Cardiac septum (tissue), 1 donor: ENCODE measurements at regions of chr6 and their contacts with region 1.

Region 1: GRCh38 chr6:165649166-165650137 is 13.6 kb downstream of the PDE10A start:
- DNase-seq: no peak

Region 2: GRCh38 chr6:165573671-165574070 is 75.8 kb before region 1 on chr6:
- intact Hi-C with region 1: loop called (anchors 5 kb)
- DNase-seq: peak; percentile 83